ENCODE measurements at regions of chr1 and their contacts with region 1.

Region 1: GRCh38 chr1:161071886-161072371 is 2.2 kb upstream of the ARHGAP30 start:
- DNase-seq: no peak
- ATAC-seq: peak; percentile 16
- H3K4me3 Mint-ChIP-seq: no peak overlapping the region
- H3K27ac Mint-ChIP-seq: peak overlapping the region; percentile 62
- H3K4me1 Mint-ChIP-seq: peaks cover 39% of the 10 kb centered on the region
- H3K27me3 Mint-ChIP-seq: no peaks in the 10 kb centered on the region
- CTCF ChIP-seq: peak; percentile 46

Region 2: DNA sequence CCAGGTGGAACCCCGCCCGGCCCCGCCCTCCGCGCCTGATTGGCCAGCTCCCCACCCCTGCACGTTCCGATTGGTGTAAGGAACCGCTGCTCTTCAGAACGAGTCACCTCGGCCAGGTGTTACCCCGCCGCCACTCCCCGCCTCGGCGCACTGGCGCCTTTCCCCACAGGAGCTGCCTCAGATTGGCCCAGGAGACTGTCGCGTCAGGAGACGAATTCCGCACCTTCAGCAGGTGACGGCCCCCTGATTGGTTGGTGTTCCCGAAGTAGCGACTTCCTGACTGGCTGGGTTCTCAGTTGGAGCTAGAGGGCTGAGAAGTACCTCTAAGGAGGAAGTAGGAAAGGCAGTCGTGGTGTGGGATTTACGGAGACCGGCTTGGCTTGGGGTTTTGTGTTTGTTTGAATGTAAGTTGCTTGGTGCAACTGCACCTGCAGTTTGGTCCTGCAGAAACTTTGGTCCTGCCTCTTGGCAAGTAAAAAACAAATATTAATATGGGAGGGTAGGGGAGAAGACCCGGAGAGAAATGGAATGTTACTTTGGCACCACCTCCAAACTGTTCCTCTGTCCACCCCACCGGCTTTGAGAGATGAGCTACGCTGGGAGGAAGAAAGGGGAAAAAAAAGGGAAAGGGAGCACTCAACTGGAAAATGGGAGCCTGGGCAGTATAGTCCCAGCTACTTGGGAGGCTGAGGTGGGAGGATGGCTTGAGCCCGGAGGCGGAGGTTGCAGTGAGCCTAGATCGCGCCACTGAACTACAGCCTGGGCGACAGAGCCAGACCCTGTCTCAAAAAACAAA is 50.6 kb before region 1 on chr1:
- CTCF ChIA-PET with region 1: no interaction called
- POLR2A ChIA-PET with region 1: interaction called, 8 read pairs
- intact Hi-C with region 1: loop called (anchors 2 kb)
- DNase-seq: peak; percentile 74
- ATAC-seq: peak; percentile 92
- H3K4me3 Mint-ChIP-seq: peak overlapping the region; percentile 95
- H3K27ac Mint-ChIP-seq: peak overlapping the region; percentile 91
- H3K4me1 Mint-ChIP-seq: peaks cover 27% of the 10 kb centered on the region
- H3K27me3 Mint-ChIP-seq: no peaks in the 10 kb centered on the region
- CTCF ChIP-seq: no peak

Region 3: GRCh38 chr1:161054805-161055204 is 17.1 kb before region 1 on chr1:
- CTCF ChIA-PET with region 1: interaction called, 3 read pairs
- POLR2A ChIA-PET with region 1: interaction called, 18 read pairs
- intact Hi-C with region 1: loop called (anchors 1 kb)
- DNase-seq: no peak
- ATAC-seq: no peak
- H3K4me3 Mint-ChIP-seq: no peak overlapping the region
- H3K27ac Mint-ChIP-seq: no peak overlapping the region
- H3K4me1 Mint-ChIP-seq: peaks cover 10% of the 10 kb centered on the region
- H3K27me3 Mint-ChIP-seq: no peaks in the 10 kb centered on the region
- CTCF ChIP-seq: no peak

Region 4: DNA sequence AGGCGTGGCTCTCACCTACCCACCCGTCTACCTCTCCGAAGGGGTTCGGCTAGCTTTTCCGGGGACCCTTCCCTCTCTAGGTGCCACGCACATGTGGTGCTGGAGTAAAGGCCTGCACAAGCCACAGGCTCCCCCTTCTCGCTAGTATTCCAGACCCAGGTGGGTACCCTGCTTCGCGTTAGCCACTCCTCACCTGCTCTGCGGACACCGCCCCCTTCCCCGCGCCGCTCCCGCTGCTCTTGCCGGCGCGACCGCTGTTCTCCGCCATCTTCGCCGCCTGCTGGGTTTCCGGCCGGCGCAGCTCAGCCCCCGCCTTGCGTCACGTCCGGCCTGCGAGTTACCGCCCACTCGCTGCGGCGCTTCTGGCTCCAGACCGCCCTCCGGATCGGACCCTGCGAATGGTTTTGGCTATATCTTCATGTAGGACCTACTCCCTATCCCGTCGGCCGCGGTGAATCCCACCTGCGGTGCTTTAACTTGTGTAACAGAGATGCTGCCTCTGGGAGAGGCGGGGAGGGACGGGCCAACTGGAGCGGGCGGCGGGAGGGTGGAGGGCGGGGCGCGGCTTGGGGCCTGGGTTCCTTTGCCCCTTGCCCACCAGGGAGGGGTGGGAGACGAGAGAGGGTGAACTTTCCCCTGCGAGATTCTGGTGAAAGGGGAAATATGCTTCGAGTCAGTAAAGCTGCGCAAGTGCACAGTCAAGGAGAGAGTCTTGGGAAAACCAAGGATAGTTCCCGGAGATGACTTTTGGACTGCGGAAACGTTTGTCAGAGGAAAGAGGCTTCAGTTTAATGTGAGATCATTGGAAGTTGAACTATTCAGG is 46.0 kb after region 1 on chr1 and contains the starts of genes NIT1 and PFDN2:
- CTCF ChIA-PET with region 1: interaction called, 10 read pairs
- POLR2A ChIA-PET with region 1: interaction called, 29 read pairs
- intact Hi-C with region 1: no loop called
- DNase-seq: peak; percentile 84
- ATAC-seq: peak; percentile 77
- H3K4me3 Mint-ChIP-seq: peak within 1 kb of the TSS; percentile 92
- H3K27ac Mint-ChIP-seq: peak within 1 kb of the TSS; percentile 89
- H3K4me1 Mint-ChIP-seq: peaks cover 87% of the 10 kb centered on the region
- H3K27me3 Mint-ChIP-seq: no peaks in the 10 kb centered on the region
- CTCF ChIP-seq: no peak
- total RNA-seq, gene NIT1: 40.5 and 43.9 TPM in 2 replicates
- total RNA-seq, gene PFDN2: 43.8 and 67.9 TPM in 2 replicates

Region 5: GRCh38 chr1:161153679-161154426 is 81.9 kb after region 1 on chr1 and contains the start of gene UFC1:
- CTCF ChIA-PET with region 1: interaction called, 3 read pairs
- POLR2A ChIA-PET with region 1: interaction called, 18 read pairs
- intact Hi-C with region 1: loop called (anchors 1 kb)
- DNase-seq: peak; percentile 66
- ATAC-seq: peak; percentile 94
- H3K4me3 Mint-ChIP-seq: peak within 1 kb of the TSS; percentile 99
- H3K27ac Mint-ChIP-seq: peak within 1 kb of the TSS; percentile 100
- H3K4me1 Mint-ChIP-seq: peaks cover 21% of the 10 kb centered on the region
- H3K27me3 Mint-ChIP-seq: no peaks in the 10 kb centered on the region
- CTCF ChIP-seq: no peak
- total RNA-seq, gene UFC1: 107 and 127 TPM in 2 replicates

Region 6: DNA sequence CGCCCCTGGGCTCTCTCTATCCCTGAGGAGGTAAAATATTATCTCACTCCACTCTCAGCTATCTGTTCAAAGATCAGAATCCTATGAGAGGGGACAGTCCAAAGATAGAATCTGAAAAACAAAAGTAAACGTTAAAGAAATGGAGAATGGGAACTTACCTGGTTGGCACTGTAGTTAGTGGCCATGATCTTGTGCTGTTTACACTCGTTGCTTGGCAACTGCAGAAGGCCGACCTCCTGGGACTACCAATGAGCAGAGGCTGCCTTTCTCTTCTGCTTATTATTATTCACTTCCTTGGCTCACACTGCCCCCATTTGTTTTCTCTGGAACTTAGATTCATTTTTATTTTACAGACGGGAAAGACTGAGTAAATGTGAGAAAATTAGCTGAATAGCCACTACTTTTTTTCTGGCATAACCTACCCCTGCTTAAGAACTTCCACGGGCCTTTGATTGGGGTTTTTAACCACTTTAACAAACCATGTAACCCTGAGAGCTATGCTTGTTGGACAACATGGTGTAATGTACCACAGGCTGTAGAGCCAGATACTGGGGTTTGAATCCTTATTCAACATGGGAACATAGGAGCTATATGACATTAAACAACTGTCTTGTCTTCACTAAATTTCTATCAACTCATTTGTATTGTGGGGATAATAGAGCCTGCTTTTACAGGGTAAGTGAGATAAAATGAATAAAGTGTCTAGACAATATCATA is 295.9 kb after region 1 on chr1 and contains the start of gene CFAP126:
- CTCF ChIA-PET with region 1: no interaction called
- POLR2A ChIA-PET with region 1: no interaction called
- intact Hi-C with region 1: loop called (anchors 5 kb)
- DNase-seq: peak; percentile 35
- ATAC-seq: peak; percentile 100
- H3K4me3 Mint-ChIP-seq: peak within 1 kb of the TSS; percentile 17
- H3K27ac Mint-ChIP-seq: peak within 1 kb of the TSS; percentile 81
- H3K4me1 Mint-ChIP-seq: peaks cover 10% of the 10 kb centered on the region
- H3K27me3 Mint-ChIP-seq: no peaks in the 10 kb centered on the region
- CTCF ChIP-seq: no peak
- total RNA-seq, gene CFAP126: not detected in 2 replicates